GM12878 (cell line): ENCODE measurements at regions of chr16 and their contacts with region 1.

Region 1: DNA sequence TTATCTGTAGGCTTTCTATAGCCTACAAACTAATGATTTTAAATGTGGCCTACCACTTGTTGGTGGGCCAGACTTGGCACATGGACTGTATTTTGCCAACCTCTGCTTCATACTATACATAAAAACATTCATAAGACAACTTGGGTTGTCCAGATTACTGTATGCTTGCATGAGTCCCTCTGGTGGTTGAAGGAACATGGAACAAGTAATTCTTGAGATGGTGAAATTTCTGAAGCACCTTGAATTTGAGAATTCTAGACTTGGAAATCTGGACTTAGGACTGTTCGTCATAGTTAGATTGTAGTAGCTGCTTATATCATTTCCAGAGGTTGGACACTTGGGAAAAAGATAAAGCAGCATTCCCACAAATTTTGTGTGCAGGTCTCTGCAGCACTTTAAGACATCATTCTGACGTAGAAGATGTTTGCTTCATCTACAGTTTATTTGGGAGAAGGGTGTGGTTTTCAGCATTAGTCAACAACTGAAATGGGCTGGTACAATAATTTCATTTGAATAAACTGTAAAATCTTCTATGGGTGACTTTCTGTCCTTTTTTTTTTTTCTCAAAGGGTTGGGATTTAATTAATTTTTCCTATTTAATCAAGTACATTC is 31.2 kb downstream of the NFATC3 start:
- DNase-seq: no peak
- ATAC-seq: peak; percentile 59
- H3K4me3 ChIP-seq: no peak overlapping the region
- H3K27ac ChIP-seq: no peak overlapping the region
- H3K4me1 ChIP-seq: peaks cover 19% of the 10 kb centered on the region
- H3K27me3 ChIP-seq: no peaks in the 10 kb centered on the region
- CTCF ChIP-seq: peak; percentile 47 to 58 (median 57); a peak in 5 of 6 replicates
- EP300 ChIP-seq: no peak
- POLR2A ChIP-seq: no peak
- RAD21 ChIP-seq: peak; percentile 61

Region 2: GRCh38 chr16:67660564-67661028 is 455.8 kb before region 1 on chr16 and contains the start of gene PARD6A:
- CTCF ChIA-PET with region 1: no interaction called
- POLR2A ChIA-PET with region 1: no interaction called
- RAD21 ChIA-PET with region 1: no interaction called
- SMC1A ChIA-PET with region 1: no interaction called
- in situ Hi-C with region 1: no loop called
- intact Hi-C with region 1: no loop called
- DNase-seq: peak; percentile 87
- ATAC-seq: peak; percentile 84
- H3K4me3 ChIP-seq: peak within 1 kb of the TSS; percentile 92
- H3K27ac ChIP-seq: peak within 1 kb of the TSS; percentile 80
- H3K4me1 ChIP-seq: peaks cover 10% of the 10 kb centered on the region
- H3K27me3 ChIP-seq: no peaks in the 10 kb centered on the region
- CTCF ChIP-seq: no peak
- EP300 ChIP-seq: no peak
- POLR2A ChIP-seq: no peak
- RAD21 ChIP-seq: no peak
- polyA plus RNA-seq, gene PARD6A: 0.42 to 0.62 TPM

Region 3: DNA sequence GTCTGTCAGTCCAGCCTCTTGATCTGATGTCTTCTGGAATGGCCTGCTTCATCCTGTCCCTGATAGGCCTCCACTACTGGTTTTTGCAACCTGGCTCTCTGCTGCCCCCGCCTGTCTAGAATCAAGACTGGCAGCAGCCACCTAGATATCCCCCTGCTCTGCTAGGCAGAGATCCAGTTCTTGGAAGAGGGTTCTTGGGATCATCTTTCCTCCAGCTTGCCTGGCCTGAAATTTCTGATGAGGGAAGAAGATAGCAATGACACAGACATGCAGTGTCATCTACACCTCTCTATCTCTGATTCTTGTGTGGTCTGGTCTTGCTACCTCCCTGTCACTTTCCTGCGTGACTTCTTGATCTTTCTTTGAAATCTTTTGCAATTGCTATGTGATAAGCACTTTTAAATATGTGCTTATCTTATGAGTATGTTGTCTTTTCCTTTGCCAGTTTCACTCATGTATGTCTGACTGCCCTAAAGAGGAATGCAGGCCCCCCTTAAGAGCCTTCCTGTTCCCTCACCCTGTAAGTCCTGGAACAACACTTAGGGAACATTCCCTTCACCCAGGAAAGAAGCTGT is 51.5 kb before region 1 on chr16:
- CTCF ChIA-PET with region 1: interaction called, 6 read pairs
- POLR2A ChIA-PET with region 1: no interaction called
- RAD21 ChIA-PET with region 1: interaction called, 18 read pairs
- SMC1A ChIA-PET with region 1: interaction called, 12 read pairs
- in situ Hi-C with region 1: no loop called
- intact Hi-C with region 1: no loop called
- DNase-seq: no peak
- ATAC-seq: peak; percentile 98
- H3K4me3 ChIP-seq: no peak overlapping the region
- H3K27ac ChIP-seq: no peak overlapping the region
- H3K4me1 ChIP-seq: peaks cover 4% of the 10 kb centered on the region; the same call in 1 of the 2 replicates
- H3K27me3 ChIP-seq: no peaks in the 10 kb centered on the region
- CTCF ChIP-seq: peak; percentile 87 to 88 (median 87)
- EP300 ChIP-seq: no peak
- POLR2A ChIP-seq: no peak
- RAD21 ChIP-seq: peak; percentile 70

Region 4: DNA sequence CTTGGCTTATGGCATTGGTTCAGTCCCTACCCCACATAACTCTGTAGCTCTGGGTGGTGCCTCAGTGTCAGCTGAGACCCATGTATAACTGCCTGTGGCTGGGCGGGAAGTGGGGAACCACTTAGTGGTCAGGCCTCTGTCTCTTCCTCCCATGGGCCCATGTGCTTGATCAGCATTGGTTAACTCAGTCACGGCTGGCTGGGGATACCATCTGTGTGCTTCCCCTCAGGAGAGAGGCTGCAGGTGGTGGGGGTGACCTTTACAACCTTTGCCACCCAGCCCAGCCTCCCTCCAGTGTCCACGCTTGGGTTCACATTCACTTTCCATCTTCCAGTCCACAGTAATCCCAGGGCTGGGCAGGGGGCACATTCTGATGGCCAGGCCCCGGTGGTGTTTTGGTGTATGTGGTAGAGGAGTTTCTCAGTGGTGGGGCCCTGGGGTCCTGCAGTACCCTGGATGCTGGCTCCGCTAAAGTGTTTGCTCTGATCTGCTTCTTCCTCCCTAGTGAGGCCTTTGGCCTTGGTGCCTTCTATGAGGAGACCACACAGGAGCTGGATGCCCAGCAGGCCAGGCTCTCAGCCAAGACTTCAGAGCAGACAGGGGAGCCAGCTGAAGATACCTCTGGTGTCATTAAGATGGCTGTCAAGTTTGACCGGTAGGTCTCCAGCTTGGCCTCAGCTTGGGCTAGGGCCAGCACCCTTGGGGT is 41.4 kb before region 1 on chr16:
- CTCF ChIA-PET with region 1: interaction called, 11 read pairs
- POLR2A ChIA-PET with region 1: interaction called, 6 read pairs
- RAD21 ChIA-PET with region 1: interaction called, 18 read pairs
- SMC1A ChIA-PET with region 1: interaction called, 23 read pairs
- in situ Hi-C with region 1: no loop called
- intact Hi-C with region 1: no loop called
- DNase-seq: peak; percentile 95
- ATAC-seq: peak; percentile 93
- H3K4me3 ChIP-seq: no peak overlapping the region
- H3K27ac ChIP-seq: peak overlapping the region; percentile 71
- H3K4me1 ChIP-seq: peaks cover 50% of the 10 kb centered on the region
- H3K27me3 ChIP-seq: no peaks in the 10 kb centered on the region
- CTCF ChIP-seq: no peak
- EP300 ChIP-seq: peak; percentile 69 to 92; a peak in 3 of 4 replicates
- POLR2A ChIP-seq: 0 out of 2 replicates have a peak, but pooled peaks have one; percentile 19
- RAD21 ChIP-seq: no peak

Region 5: DNA sequence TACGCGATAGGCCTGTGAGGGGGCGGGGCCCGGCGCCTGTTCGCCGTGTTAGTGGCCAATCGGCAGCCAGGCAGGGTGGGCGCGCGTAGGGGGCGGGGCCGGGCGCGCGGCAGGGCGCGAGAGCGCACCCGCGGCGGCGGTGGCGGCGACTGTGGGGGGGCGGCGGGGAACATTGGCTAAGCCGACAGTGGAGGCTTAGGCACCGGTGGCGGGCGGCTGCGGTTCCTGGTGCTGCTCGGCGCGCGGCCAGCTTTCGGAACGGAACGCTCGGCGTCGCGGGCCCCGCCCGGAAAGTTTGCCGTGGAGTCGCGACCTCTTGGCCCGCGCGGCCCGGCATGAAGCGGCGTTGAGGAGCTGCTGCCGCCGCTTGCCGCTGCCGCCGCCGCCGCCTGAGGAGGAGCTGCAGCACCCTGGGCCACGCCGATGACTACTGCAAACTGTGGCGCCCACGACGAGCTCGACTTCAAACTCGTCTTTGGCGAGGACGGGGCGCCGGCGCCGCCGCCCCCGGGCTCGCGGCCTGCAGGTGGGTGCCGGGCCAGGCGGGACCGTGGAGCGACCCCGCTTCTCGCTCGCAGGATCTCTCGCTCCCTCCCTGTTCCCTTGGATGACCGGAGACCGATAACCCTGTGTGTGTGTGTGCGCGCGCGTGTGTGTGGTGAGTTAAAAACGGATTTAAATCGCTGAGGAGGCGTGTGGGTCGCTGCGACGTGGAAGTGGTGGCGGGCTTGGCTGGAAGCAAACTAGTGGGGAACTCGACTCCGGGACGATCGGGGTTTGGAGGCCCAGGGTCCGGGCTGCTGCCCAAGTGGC is 30.9 kb before region 1 on chr16 and contains the start of gene NFATC3:
- CTCF ChIA-PET with region 1: interaction called, 58 read pairs
- POLR2A ChIA-PET with region 1: interaction called, 28 read pairs
- RAD21 ChIA-PET with region 1: interaction called, 24 read pairs
- SMC1A ChIA-PET with region 1: interaction called, 45 read pairs
- in situ Hi-C with region 1: no loop called
- intact Hi-C with region 1: no loop called
- DNase-seq: no peak
- ATAC-seq: peak; percentile 80
- H3K4me3 ChIP-seq: peak within 1 kb of the TSS; percentile 89
- H3K27ac ChIP-seq: peak within 1 kb of the TSS; percentile 86
- H3K4me1 ChIP-seq: peaks cover 18% of the 10 kb centered on the region
- H3K27me3 ChIP-seq: no peaks in the 10 kb centered on the region
- CTCF ChIP-seq: no peak
- EP300 ChIP-seq: no peak
- POLR2A ChIP-seq: peak; percentile 80
- RAD21 ChIP-seq: no peak
- polyA plus RNA-seq, gene NFATC3: 4.2 to 5.5 TPM

Region 6: GRCh38 chr16:68093816-68094613 is 22.3 kb before region 1 on chr16:
- CTCF ChIA-PET with region 1: interaction called, 58 read pairs
- POLR2A ChIA-PET with region 1: interaction called, 4 read pairs
- RAD21 ChIA-PET with region 1: interaction called, 24 read pairs
- SMC1A ChIA-PET with region 1: interaction called, 45 read pairs
- in situ Hi-C with region 1: no loop called
- intact Hi-C with region 1: no loop called
- DNase-seq: no peak
- ATAC-seq: peak; percentile 69
- H3K4me3 ChIP-seq: no peak overlapping the region
- H3K27ac ChIP-seq: no peak overlapping the region
- H3K4me1 ChIP-seq: peaks cover 23% of the 10 kb centered on the region
- H3K27me3 ChIP-seq: no peaks in the 10 kb centered on the region
- CTCF ChIP-seq: peak; percentile 38 to 55 (median 48); a peak in 4 of 6 replicates
- EP300 ChIP-seq: no peak
- POLR2A ChIP-seq: no peak
- RAD21 ChIP-seq: peak; percentile 69

Region 7: GRCh38 chr16:68128577-68129305 is 12.4 kb after region 1 on chr16:
- CTCF ChIA-PET with region 1: interaction called, 6 read pairs
- POLR2A ChIA-PET with region 1: interaction called, 4 read pairs
- RAD21 ChIA-PET with region 1: interaction called, 7 read pairs
- SMC1A ChIA-PET with region 1: interaction called, 19 read pairs
- in situ Hi-C with region 1: no loop called
- intact Hi-C with region 1: no loop called
- DNase-seq: no peak
- ATAC-seq: no peak
- H3K4me3 ChIP-seq: no peak overlapping the region
- H3K27ac ChIP-seq: no peak overlapping the region
- H3K4me1 ChIP-seq: peaks cover 11% of the 10 kb centered on the region
- H3K27me3 ChIP-seq: no peaks in the 10 kb centered on the region
- CTCF ChIP-seq: no peak
- EP300 ChIP-seq: no peak
- POLR2A ChIP-seq: no peak
- RAD21 ChIP-seq: no peak